Left colon (tissue), 2 donors: ENCODE measurements at regions of chr11 and their contacts with region 1.

Region 1: GRCh38 chr11:38005597-38005996 is 1407.6 kb upstream of the RAG2 start:
- DNase-seq: no peak
- ATAC-seq: no peak

Region 2: DNA sequence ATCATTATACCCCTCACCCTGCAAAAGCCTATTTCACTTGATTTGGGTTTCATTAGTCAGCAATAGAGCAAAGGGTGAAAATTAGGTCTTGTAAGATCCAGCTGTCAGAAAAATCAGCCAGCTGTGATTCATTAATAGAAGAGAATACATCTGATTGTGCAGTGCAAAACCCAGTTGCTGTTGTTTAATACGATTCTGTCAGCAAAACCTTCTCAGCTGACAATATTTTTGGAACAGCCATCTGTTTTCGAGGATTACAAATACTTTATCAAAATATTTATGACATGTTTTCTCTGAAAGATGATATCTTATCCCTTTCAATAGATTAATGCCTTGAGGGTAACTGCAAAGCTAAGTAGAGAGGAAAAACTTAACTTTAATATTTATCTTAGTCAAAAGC is 53.6 kb before region 1 on chr11:
- intact Hi-C with region 1: loop called in 1 of 2 experiments (anchors 5 kb)
- DNase-seq: no peak
- ATAC-seq: no peak

Region 3: GRCh38 chr11:38191101-38191500 is 185.5 kb after region 1 on chr11:
- intact Hi-C with region 1: no loop called
- DNase-seq: no peak
- ATAC-seq: no peak

Region 4: DNA sequence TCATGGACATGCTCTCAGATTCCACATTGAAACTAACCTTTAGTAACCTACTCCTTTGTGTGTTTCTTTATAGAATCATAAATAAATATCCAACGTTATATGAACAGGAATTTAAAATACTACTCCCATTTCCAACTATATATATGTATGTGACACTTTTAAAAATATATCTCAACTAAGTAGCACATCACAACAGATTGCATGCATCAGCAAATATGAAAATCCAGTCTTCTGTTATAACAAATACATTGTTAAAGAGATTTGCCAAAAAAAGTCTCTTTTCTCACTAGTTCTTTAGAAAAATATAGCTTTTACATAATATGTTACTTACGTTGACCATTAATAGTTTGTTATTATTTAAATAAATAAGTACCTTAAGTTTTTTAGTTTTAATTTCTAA is 201.1 kb after region 1 on chr11:
- intact Hi-C with region 1: no loop called
- DNase-seq: no peak
- ATAC-seq: no peak